Gastrocnemius medialis (tissue), 4 donors: ENCODE measurements at regions of chr5 and their contacts with region 1.

Region 1: DNA sequence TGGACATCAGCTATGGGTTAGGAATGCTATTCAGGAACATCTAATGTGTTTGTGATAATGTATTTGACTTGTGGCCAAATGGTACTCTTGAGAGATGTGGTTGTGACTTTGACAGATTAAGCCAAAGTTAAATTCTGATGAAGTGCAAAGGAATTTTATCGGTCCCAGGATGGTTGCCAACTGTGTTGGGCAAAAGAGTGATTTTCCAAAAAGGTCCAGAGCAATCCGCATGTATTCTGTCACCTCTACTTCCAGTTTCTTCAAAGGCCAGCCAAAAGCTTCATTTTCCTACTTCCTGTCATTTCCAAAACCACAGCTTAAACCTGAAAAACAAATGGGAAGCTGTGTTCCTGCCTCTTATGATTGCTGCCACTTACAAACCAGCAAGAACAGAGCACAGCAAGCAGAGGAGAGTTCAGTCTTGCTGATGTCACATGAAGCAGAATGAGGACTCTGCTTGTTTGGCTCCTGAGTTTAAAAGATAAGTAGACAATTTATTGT is 59.8 kb downstream of the MARCHF3 start:
- DNase-seq: no peak
- ATAC-seq: no peak
- H3K4me3 ChIP-seq: no peak overlapping the region
- H3K27ac ChIP-seq: no peak overlapping the region
- H3K4me1 ChIP-seq: peaks cover 17 to 21% of the 10 kb centered on the region in 2 donors
- H3K27me3 ChIP-seq: no peaks in the 10 kb centered on the region
- CTCF ChIP-seq: no peak
- POLR2A ChIP-seq: no peak

Region 2: GRCh38 chr5:126846344-126846743 is 124.2 kb before region 1 on chr5:
- in situ Hi-C with region 1: no loop called
- intact Hi-C with region 1: no loop called
- DNase-seq: no peak
- ATAC-seq: peak in 1 of 2 donors; percentile 51
- H3K4me3 ChIP-seq: no peak overlapping the region
- H3K27ac ChIP-seq: no peak overlapping the region
- H3K4me1 ChIP-seq: peaks cover 0 to 11% of the 10 kb centered on the region in 2 donors
- H3K27me3 ChIP-seq: peaks cover 0 to 3% (median 0%) of the 10 kb centered on the region in 3 donors
- CTCF ChIP-seq: no peak
- POLR2A ChIP-seq: no peak

Region 3: DNA sequence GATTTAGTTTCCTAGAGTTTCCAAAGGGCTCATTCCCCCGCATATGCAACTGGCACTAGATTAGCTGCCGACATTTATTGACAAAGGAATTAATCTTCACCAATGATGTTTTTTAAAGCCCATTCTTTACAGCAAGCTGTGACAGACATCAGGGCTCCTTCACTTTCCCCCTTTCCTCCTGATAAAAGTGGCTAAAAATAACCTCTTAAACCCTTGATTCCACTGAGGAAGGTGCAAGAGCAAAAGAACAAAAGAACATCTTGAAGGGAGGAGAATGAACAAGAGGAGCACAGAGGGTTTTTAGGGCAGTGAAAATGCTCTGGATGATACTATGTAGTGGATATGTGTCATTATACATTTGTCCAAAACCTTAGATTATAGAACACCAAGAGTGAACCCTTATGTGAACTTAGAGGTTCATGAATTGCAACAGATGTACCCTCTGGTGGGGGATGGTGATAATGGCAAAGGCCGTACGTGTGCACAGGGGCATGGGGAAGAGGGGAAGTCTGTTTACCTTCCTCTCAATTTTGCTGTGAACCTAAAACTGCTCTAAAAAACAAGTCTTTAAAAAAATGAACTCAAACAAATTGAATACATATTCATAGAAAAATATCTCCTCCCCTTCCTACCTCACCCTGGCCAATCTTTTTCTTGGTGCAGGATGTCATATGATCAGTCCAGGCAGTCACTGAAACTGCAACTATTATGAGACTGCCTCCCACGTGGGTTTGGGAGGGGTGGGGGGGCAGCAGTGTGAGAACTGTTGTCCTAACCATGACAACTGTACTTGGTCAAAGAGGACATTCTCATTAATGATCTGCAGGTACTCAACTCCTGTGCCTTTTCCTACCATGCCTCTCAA is 23.2 kb before region 1 on chr5:
- in situ Hi-C with region 1: no loop called
- intact Hi-C with region 1: loop called (anchors 1 kb)
- DNase-seq: no peak
- ATAC-seq: peak in 1 of 2 donors; percentile 27
- H3K4me3 ChIP-seq: no peak overlapping the region
- H3K27ac ChIP-seq: no peak overlapping the region
- H3K4me1 ChIP-seq: peaks cover 4 to 7% of the 10 kb centered on the region in 2 donors
- H3K27me3 ChIP-seq: no peaks in the 10 kb centered on the region
- CTCF ChIP-seq: no peak
- POLR2A ChIP-seq: no peak